MCF 10A (cell line): ENCODE measurements at regions of chr17 and their contacts with region 1.

Region 1: GRCh38 chr17:27879987-27880608 is 13.1 kb downstream of the LYRM9 start:
- DNase-seq: peak; percentile 77
- H3K4me3 Mint-ChIP-seq: no peak overlapping the region
- H3K27ac Mint-ChIP-seq: no peak overlapping the region
- H3K4me1 Mint-ChIP-seq: no peaks in the 10 kb centered on the region
- H3K27me3 Mint-ChIP-seq: no peaks in the 10 kb centered on the region
- CTCF ChIP-seq: peak; percentile 89

Region 2: GRCh38 chr17:27768858-27769410 is 111.2 kb before region 1 on chr17:
- CTCF ChIA-PET with region 1: interaction called, 14 read pairs
- POLR2A ChIA-PET with region 1: interaction called, 4 read pairs
- intact Hi-C with region 1: no loop called
- DNase-seq: no peak
- H3K4me3 Mint-ChIP-seq: no peak overlapping the region
- H3K27ac Mint-ChIP-seq: no peak overlapping the region
- H3K4me1 Mint-ChIP-seq: no peaks in the 10 kb centered on the region
- H3K27me3 Mint-ChIP-seq: no peaks in the 10 kb centered on the region
- CTCF ChIP-seq: no peak

Region 3: DNA sequence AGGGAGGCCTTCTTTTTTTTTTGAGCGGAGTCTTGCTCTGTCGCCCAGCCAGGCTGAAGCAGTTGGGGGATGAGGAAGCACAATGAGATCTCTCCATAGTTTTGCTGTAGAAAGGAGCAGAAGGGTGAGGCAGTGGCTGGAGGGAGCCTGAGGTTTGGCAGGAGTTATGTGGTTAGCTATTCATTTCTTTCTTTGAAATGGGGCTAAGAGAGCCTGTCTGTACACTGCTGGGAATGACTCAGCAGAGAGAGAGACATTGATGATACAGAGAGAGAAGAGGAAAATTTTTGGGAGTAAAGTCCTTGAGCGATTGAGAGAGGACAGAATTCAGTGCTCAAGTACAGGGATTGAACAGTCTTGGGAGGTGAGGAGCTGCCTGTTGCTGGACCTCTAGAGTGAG is 101.9 kb before region 1 on chr17:
- CTCF ChIA-PET with region 1: interaction called, 19 read pairs
- POLR2A ChIA-PET with region 1: no interaction called
- intact Hi-C with region 1: no loop called
- DNase-seq: peak; percentile 41
- H3K4me3 Mint-ChIP-seq: no peak overlapping the region
- H3K27ac Mint-ChIP-seq: peak overlapping the region; percentile 47
- H3K4me1 Mint-ChIP-seq: peaks cover 17% of the 10 kb centered on the region
- H3K27me3 Mint-ChIP-seq: no peaks in the 10 kb centered on the region
- CTCF ChIP-seq: no peak

Region 4: GRCh38 chr17:27954548-27955495 is 74.7 kb after region 1 on chr17:
- CTCF ChIA-PET with region 1: no interaction called
- POLR2A ChIA-PET with region 1: no interaction called
- intact Hi-C with region 1: no loop called
- DNase-seq: no peak
- H3K4me3 Mint-ChIP-seq: no peak overlapping the region
- H3K27ac Mint-ChIP-seq: no peak overlapping the region
- H3K4me1 Mint-ChIP-seq: no peaks in the 10 kb centered on the region
- H3K27me3 Mint-ChIP-seq: peaks cover 12% of the 10 kb centered on the region
- CTCF ChIP-seq: no peak